ENCODE measurements at regions of chr20 and their contacts with region 1.

Region 1: DNA sequence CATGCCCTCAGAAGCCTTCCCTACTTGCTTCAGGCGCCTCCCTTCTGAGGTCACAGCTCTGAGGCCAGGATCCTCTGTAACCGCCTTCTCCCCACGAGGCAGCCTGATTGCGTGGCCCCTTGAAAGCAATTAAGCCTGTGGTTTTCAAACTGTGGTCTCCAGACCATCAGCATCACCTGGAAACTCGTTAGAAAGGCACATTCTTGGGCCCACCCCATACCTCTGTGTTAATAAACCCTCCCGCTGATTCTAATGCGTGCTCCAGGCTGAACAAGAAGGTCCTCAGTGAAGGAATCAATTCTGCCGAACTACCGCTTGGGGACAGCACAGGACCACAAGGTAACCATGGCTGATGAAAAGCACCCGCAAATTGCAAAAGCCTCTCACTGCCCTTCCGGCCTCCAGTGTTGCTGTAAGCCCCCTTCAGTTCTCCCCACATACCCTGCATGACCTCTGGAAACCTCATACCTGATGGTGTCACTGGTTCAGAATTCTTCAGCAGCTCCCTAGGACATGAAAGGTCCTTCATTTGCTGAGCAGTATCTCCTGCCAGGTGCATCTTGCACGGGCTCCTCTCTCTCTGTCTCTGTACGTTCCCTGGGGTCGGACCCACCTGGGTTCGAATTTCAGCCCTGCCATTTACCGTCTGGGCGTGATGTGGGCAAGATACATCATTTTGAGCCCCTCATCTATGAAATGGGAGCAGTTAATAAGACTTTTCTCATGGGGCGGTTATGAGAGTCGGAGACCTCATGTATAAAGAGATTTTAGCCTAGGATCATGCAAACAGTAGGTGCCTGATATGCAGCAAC is 93.3 kb upstream of the RNF24 start:
- DNase-seq: peak; percentile 87
- ATAC-seq: peak; percentile 58
- H3K4me3 ChIP-seq: no peak overlapping the region
- H3K27ac ChIP-seq: peak overlapping the region; percentile 85
- H3K4me1 ChIP-seq: peaks cover 39% of the 10 kb centered on the region
- H3K27me3 ChIP-seq: no peaks in the 10 kb centered on the region
- CTCF ChIP-seq: peak; percentile 99

Region 2: GRCh38 chr20:3980260-3981131 is 128.2 kb before region 1 on chr20:
- CTCF ChIA-PET with region 1: no interaction called
- POLR2A ChIA-PET with region 1: no interaction called
- intact Hi-C with region 1: no loop called
- DNase-seq: peak; percentile 53
- ATAC-seq: peak; percentile 94
- H3K4me3 ChIP-seq: peak overlapping the region; percentile 38; the same call in 1 of the 2 replicates
- H3K27ac ChIP-seq: peak overlapping the region; percentile 56
- H3K4me1 ChIP-seq: peaks cover 13% of the 10 kb centered on the region
- H3K27me3 ChIP-seq: no peaks in the 10 kb centered on the region
- CTCF ChIP-seq: no peak

Region 3: GRCh38 chr20:4045741-4046140 is 63.0 kb before region 1 on chr20:
- CTCF ChIA-PET with region 1: no interaction called
- POLR2A ChIA-PET with region 1: no interaction called
- intact Hi-C with region 1: no loop called
- DNase-seq: peak; percentile 80
- ATAC-seq: peak; percentile 27
- H3K4me3 ChIP-seq: no peak overlapping the region
- H3K27ac ChIP-seq: 0 out of 2 replicates have a peak overlapping the region, but pooled peaks have one; percentile 7
- H3K4me1 ChIP-seq: peaks cover 41% of the 10 kb centered on the region
- H3K27me3 ChIP-seq: no peaks in the 10 kb centered on the region
- CTCF ChIP-seq: no peak

Region 4: GRCh38 chr20:4135385-4136077 is 26.8 kb after region 1 on chr20:
- CTCF ChIA-PET with region 1: no interaction called
- POLR2A ChIA-PET with region 1: no interaction called
- intact Hi-C with region 1: loop called (anchors 2 kb)
- DNase-seq: peak; percentile 99
- ATAC-seq: peak; percentile 92
- H3K4me3 ChIP-seq: no peak overlapping the region
- H3K27ac ChIP-seq: peak overlapping the region; percentile 96
- H3K4me1 ChIP-seq: peaks cover 46% of the 10 kb centered on the region
- H3K27me3 ChIP-seq: no peaks in the 10 kb centered on the region
- CTCF ChIP-seq: no peak

Region 5: DNA sequence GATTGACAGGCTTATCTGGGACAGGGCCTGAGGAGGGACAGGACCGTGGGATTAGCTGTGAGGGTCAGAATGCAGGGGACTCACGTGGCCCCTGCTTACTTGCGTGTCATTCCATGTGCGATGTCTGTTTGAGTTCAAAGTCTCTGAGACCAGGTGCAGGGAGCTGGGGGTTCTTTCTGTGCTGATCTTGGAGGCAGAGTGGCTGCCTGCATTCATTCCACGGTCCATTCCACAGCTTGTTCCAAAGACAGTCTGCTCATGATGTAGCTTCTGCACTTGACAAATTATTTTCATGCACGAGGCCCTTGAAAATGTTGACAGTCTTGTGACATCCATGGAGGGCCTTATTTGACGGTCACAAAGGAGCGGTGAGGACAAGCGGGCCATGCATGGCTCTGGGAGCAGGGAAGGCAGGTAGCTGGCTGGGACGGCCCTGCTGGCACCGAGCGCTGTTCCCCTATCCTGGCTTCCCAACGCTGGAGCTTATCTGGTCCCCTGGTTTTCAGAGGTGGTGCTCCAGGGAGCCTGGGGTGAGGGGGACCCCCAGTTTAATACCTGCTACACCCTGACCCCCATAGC is 62.9 kb after region 1 on chr20:
- CTCF ChIA-PET with region 1: no interaction called
- POLR2A ChIA-PET with region 1: no interaction called
- intact Hi-C with region 1: no loop called
- DNase-seq: no peak
- ATAC-seq: peak; percentile 18
- H3K4me3 ChIP-seq: peak overlapping the region; percentile 67
- H3K27ac ChIP-seq: peak overlapping the region; percentile 90
- H3K4me1 ChIP-seq: peaks cover 21% of the 10 kb centered on the region
- H3K27me3 ChIP-seq: no peaks in the 10 kb centered on the region
- CTCF ChIP-seq: no peak

Region 6: DNA sequence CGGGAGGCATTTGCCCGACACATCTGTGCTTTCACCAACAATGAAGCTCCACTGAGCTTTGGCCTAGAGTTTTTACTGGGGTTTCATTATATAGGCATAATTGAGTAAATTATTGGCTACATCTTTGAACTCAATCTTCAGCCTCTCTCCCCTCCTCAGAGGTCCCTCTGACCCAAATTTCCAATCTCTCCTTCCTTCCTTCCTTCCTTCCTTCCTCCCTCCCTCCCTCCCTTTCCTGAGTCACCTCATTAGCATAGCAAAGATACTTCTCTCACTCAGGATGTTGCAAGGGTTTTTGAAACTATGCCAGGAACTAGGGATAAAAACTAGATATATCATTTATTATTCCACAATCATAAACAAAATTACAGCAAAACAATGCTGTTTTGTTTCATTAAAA is 374.8 kb after region 1 on chr20:
- CTCF ChIA-PET with region 1: no interaction called
- POLR2A ChIA-PET with region 1: no interaction called
- intact Hi-C with region 1: no loop called
- DNase-seq: peak; percentile 71
- ATAC-seq: peak; percentile 29; the same call in 1 of the 2 replicates
- H3K4me3 ChIP-seq: no peak overlapping the region
- H3K27ac ChIP-seq: peak overlapping the region; percentile 43
- H3K4me1 ChIP-seq: peaks cover 21% of the 10 kb centered on the region
- H3K27me3 ChIP-seq: no peaks in the 10 kb centered on the region
- CTCF ChIP-seq: no peak